ENCODE measurements at regions of chr10 and their contacts with region 1.

Region 1: DNA sequence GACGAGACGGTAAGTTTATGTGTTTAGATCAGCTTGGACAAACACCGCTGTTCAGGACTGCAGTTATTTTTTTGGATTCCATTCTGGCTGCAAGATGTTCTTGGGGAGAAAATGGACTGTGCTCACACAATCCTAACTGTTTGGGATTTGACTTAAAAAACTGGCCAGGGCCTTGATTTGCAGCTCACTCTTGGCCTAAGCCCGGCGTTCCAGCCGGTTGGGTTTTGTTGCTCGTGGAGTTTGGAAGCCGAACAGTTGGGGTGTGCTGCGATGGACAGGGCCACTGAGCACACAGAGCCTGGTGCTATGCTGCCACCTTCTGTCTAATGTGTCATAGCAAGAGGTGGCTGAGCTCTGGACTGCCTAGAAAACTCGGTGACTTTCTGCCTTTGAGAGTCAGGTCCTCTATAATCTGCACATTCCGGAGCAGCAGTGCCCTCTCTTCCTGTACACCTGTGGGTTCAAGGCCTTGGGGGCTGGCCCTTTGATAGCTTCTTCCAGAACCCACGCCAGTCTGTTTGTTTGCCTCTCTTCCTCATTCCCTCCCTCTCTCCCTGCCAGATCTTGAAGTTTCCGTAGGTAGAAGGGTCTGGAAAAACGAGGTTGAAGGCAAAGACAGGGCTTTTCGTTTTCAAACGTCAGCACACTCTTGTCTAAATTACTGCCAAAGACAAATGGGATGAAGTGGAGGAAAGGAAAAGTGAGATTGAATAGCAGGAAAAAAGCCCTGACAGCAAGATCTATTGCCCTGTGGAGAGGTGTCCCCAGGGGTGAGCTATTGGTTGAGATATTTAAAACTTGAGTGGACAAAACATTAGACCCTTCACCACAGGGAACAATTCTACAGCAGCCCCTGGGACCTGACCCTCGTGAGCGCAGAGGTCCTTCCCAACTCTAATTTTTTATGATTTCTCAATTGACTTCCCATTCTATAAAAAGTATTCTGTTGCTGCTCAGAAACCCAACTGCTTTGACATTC is 167.5 kb upstream of the HABP2 start:
- DNase-seq: peak; percentile 50 to 92
- H3K4me3 ChIP-seq: peak overlapping the region in 1 of 2 donors; percentile 52
- H3K27ac ChIP-seq: peak overlapping the region; percentile 83 to 84
- H3K4me1 ChIP-seq: peaks cover 12 to 23% of the 10 kb centered on the region in 2 donors
- H3K27me3 ChIP-seq: no peaks in the 10 kb centered on the region
- CTCF ChIP-seq: peak; percentile 82 to 89 (median 82)

Region 2: DNA sequence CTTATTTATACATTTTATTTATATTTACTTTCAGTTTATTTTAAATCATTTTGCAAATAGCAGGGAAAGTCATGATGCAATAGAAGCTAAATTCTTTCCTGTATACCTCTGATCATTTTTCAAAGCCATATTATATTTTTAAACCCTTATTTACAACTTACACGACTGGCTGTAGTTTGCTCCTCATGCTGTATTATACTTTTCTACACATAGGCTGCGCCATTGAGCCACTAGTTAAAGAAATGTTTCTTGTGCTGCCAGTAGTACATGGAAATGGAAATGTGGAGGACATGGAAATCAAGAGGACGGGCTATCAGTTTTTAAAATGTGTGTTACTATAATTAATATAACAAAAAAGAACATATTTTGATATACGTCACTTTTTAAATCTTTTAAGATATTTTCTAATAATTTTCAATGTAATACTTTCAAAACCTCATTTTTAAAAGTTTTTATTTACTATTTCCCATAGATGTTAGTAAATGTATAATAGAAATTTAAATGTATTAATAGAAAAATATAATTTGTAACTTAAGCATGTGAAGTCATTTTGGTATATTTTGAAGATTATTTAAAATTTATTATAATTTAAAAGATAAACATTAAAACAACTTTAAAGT is 819.8 kb before region 1 on chr10:
- intact Hi-C with region 1: loop called (anchors 5 kb)
- DNase-seq: no peak
- H3K4me3 ChIP-seq: no peak overlapping the region
- H3K27ac ChIP-seq: no peak overlapping the region
- H3K4me1 ChIP-seq: peaks cover 0 to 5% of the 10 kb centered on the region in 2 donors
- H3K27me3 ChIP-seq: no peaks in the 10 kb centered on the region
- CTCF ChIP-seq: peak; percentile 37 to 52 (median 50)

Region 3: DNA sequence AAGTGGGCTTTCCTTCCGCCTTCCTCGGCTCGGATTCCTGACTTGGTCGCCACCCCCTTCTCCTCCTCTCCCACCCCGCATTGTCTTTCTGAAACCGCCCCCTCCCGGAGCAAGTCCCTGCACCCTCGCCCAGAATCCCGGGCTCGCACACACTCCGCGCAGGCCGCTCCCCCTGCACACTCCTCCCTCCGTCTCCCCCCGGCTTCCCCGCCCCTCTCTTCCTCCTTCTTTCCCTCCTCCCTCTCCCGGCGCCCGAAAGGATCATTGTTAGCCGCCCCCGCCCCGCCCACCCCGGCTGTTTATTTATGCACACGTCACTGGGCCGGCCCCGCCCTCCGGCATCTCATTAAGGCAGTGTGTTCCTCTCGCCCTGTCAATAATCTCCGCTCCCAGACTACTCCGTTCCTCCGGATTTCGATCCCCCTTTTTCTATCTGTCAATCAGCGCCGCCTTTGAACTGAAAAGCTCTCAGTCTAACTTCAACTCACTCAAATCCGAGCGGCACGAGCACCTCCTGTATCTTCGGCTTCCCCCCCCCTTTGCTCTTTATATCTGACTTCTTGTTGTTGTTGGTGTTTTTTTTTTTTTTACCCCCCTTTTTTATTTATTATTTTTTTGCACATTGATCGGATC is 435.3 kb before region 1 on chr10 and contains the start of gene TCF7L2:
- intact Hi-C with region 1: loop called (anchors 10 kb)
- DNase-seq: peak; percentile 92 to 98
- H3K4me3 ChIP-seq: peak within 1 kb of the TSS; percentile 81 to 83
- H3K27ac ChIP-seq: peak within 1 kb of the TSS; percentile 90 to 92
- H3K4me1 ChIP-seq: peaks cover 0 to 27% of the 10 kb centered on the region in 2 donors
- H3K27me3 ChIP-seq: no peaks in the 10 kb centered on the region
- CTCF ChIP-seq: no peak
- total RNA-seq, gene TCF7L2: 8.2 TPM

Region 4: GRCh38 chr10:113126229-113127201 is 258.8 kb before region 1 on chr10:
- intact Hi-C with region 1: loop called (anchors 2 kb)
- DNase-seq: peak in 1 of 2 donors; percentile 85
- H3K4me3 ChIP-seq: peak overlapping the region; percentile 55 to 61
- H3K27ac ChIP-seq: no peak overlapping the region
- H3K4me1 ChIP-seq: peaks cover 0 to 6% of the 10 kb centered on the region in 2 donors
- H3K27me3 ChIP-seq: no peaks in the 10 kb centered on the region
- CTCF ChIP-seq: peak; percentile 35 to 87 (median 36)

Region 5: GRCh38 chr10:113326160-113327111 is 58.9 kb before region 1 on chr10:
- intact Hi-C with region 1: loop called (anchors 1 kb)
- DNase-seq: peak in 1 of 2 donors; percentile 88
- H3K4me3 ChIP-seq: no peak overlapping the region
- H3K27ac ChIP-seq: peak overlapping the region; percentile 62 to 81
- H3K4me1 ChIP-seq: peaks cover 4 to 6% of the 10 kb centered on the region in 2 donors
- H3K27me3 ChIP-seq: no peaks in the 10 kb centered on the region
- CTCF ChIP-seq: peak in 1 of 3 experiments; percentile 33

Region 6: DNA sequence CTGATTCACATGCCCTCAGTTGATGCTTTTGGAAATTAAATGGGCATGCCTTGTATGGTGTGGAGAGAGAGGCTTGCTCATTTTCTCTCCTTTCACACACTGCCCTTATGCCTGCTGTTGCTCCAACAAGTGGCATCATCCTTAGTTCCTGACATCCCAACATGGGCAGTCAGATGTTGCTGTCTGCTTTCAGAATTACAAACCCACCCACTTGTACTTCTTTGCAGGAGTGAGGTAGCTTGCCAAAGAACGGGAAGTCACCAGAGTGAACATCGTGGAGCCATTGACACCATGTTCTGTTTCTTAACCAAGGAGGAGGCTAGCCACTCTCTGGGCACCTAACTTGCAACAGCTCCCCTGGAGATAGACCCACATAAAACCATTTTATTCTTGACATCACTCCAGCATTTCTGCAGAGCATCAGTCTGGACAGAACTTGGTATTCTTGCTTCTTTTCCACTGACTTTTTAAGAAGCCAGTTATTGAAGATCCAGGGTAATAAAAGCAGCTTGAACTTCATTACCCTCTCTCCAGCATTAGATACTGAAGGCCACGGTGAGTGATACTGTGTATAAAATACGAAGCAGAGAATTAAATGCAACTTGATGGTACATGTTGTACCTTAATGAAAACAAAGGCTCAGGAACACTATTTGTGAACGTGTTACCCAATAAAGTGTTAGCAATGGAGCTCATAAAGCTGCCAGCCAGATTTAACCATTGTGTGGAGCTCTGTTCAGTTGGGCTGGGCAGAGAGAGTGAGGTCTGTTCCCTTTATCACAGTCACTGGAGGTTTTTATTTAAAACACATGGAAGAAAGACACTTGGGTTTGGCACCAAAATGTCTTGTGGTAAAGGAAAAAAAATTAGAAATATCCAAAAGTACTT is 28.3 kb before region 1 on chr10:
- intact Hi-C with region 1: no loop called
- DNase-seq: no peak
- H3K4me3 ChIP-seq: no peak overlapping the region
- H3K27ac ChIP-seq: no peak overlapping the region
- H3K4me1 ChIP-seq: peaks cover 0 to 8% of the 10 kb centered on the region in 2 donors
- H3K27me3 ChIP-seq: no peaks in the 10 kb centered on the region
- CTCF ChIP-seq: no peak

Region 7: GRCh38 chr10:113563306-113564088 is 178.2 kb after region 1 on chr10:
- intact Hi-C with region 1: loop called (anchors 5 kb)
- DNase-seq: peak in 1 of 2 donors; percentile 85
- H3K4me3 ChIP-seq: peak overlapping the region; percentile 49 to 51
- H3K27ac ChIP-seq: no peak overlapping the region
- H3K4me1 ChIP-seq: no peaks in the 10 kb centered on the region
- H3K27me3 ChIP-seq: no peaks in the 10 kb centered on the region
- CTCF ChIP-seq: peak; percentile 92 to 100 (median 99)